Activated T-helper 2 cell treated with anti-CD3 and anti-CD28 coated beads, Interferon-gamma antibody, Interleukin-2, Interleukin-4, amounts not matched to agents 10 μg/mL and 5 μg/mL and 100 μg/mL, durations not matched to agents 14 hours and 24 hours and 36 hours (primary cell): ENCODE measurements at regions of chr16 and their contacts with region 1.

Region 1: DNA sequence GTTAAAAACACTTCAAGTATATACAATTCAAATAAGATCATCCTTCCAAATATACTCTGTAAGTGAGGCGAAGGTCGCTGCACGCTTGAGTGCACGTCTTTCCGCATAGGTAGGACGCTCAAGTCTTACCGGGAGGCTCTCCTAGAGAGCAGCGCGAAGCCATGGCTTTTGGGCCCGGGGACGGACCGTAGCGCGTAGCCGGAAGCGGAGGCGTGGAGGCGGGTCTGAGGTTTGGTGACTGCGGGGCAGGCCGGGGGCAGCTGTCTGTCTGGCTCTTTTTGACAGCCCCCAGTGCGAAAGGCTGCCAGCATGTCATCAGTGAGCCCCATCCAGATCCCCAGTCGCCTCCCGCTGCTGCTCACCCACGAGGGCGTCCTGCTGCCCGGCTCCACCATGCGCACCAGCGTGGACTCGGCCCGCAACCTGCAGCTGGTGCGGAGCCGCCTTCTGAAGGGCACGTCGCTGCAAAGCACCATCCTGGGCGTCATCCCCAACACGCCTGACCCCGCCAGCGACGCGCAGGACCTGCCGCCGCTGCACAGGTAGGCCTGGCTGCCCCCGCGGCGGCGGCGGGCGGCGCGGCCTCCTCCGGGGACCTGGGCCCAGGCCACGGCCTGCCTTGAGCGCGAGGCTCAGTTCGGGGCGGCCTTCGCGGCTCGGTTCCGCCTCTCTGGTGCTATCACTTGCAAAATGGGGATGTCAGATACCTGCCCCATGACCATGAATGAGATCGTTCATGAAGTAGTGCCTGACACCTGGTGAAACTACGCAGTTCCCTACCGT is at the start of gene LONP2:
- DNase-seq: peak; percentile 89
- H3K4me3 Mint-ChIP-seq: peak within 1 kb of the TSS; percentile 92
- H3K27ac Mint-ChIP-seq: peak within 1 kb of the TSS; percentile 88
- H3K4me1 Mint-ChIP-seq: peaks cover 23% of the 10 kb centered on the region
- H3K27me3 Mint-ChIP-seq: no peaks in the 10 kb centered on the region
- total RNA-seq, gene LONP2: 49.7 and 54.2 TPM in 2 replicates

Region 2: DNA sequence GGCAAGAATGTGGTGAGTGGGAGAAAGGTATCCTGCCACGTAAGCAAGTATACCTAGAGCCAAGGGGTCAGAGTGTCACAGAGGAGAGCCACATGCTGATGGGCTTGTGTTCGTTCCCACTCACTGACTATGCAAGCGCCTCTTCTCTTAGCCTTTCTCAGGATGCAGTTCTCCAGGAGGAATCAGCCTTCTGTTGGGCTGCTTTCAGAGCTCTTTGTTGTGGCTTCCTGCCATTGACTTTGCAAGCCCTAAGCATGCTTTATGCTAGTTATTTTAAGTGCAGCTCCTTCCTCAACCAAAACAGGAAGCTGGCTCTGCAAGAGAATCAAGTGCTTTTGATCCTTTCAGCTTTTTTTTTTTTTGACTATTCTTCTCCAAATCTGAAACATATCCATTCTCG is 74.4 kb after region 1 on chr16:
- intact Hi-C with region 1: loop called (anchors 10 kb)
- DNase-seq: peak; percentile 14
- H3K4me3 Mint-ChIP-seq: no peak overlapping the region
- H3K27ac Mint-ChIP-seq: peak overlapping the region; percentile 64
- H3K4me1 Mint-ChIP-seq: peaks cover 21% of the 10 kb centered on the region
- H3K27me3 Mint-ChIP-seq: no peaks in the 10 kb centered on the region

Region 3: DNA sequence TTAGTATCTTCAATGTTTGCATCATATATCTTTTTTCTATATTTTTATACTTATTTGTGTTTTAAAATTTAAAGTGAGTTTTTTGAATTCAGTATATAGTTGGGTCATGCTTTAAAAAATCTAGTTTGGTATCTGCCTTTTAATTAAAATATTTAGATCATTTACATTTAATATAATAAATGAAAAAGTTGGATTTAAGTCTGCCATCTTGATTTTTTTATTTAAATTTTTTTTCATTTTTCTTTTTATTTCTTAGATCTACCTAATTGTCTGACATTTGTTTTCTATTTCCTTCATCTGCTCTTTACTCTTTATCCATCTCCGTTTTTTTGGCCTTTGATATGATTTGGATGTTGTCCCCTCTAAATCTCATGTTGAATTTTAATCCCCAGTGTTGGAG is 415.7 kb after region 1 on chr16:
- intact Hi-C with region 1: no loop called
- DNase-seq: no peak
- H3K4me3 Mint-ChIP-seq: no peak overlapping the region
- H3K27ac Mint-ChIP-seq: no peak overlapping the region
- H3K4me1 Mint-ChIP-seq: no peaks in the 10 kb centered on the region
- H3K27me3 Mint-ChIP-seq: no peaks in the 10 kb centered on the region